OCI-LY7 (cell line): ENCODE measurements at regions of chr2 and their contacts with region 1.

Region 1: GRCh38 chr2:68362069-68362468 is 3.0 kb upstream of the PLEK start:
- DNase-seq: peak; percentile 94
- H3K4me3 ChIP-seq: peak overlapping the region; percentile 49
- H3K27ac ChIP-seq: peak overlapping the region; percentile 72
- H3K4me1 ChIP-seq: peaks cover 57% of the 10 kb centered on the region
- CTCF ChIP-seq: peak; percentile 92

Region 2: DNA sequence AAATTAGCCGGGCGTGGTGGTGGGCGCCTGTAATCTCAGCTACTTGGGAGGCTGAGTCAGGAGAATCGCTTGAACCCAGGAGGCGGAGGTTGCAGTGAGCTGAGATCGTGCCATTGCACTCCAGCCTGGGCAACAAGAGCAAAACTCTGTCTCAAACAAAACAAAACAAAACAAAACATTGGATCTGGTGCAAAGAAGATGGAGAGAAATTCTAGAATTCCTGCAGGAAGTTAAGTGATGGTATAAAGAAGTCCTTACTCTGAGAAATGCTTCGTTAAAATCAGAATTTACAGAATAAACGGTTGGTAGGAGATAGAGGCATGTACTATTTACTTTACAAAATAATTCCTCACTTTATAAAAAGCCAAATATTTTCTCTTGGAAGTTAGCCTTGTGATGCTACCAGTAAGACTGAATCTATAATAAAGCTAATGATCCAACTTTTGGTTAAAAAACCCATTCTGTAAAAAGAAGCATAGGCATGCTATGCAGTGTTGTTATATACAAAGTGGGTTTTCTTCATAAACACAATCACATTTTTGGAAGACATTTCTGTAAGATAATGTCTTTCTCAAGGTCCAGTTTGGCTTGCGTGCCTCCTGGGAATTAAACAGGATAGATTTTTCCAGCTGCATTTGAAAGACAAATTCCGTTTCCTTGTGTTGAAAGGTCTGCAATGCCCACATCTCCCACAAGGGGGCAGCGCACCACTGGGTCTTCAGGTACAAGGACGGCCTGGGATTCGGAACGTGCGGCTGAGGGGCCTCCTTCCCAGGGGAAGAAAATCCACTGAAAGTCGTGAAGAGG is 240.0 kb before region 1 on chr2:
- CTCF ChIA-PET with region 1: no interaction called
- POLR2A ChIA-PET with region 1: no interaction called
- intact Hi-C with region 1: loop called (anchors 1 kb)
- DNase-seq: peak; percentile 78
- H3K4me3 ChIP-seq: peak overlapping the region; percentile 47
- H3K27ac ChIP-seq: peak overlapping the region; percentile 96
- H3K4me1 ChIP-seq: peaks cover 48% of the 10 kb centered on the region
- CTCF ChIP-seq: peak; percentile 100

Region 3: DNA sequence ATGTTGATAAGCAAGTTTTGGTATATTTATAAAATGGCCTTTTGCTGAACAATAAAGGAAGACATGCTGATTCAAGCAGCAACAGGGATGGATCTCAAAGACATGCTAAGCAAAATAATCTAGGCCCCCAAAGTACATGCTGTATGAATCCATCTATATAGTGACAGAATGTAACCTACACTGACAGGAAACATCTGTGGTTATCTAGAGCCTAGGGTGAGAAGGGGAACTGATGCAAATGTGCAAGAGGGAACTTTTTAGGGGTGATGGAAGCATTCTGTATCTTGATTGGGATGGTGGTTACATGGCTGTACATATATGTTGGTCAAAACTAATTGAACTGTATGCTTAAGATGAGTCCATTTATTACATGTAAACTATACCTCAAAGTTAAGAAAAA is 66.6 kb before region 1 on chr2:
- CTCF ChIA-PET with region 1: no interaction called
- POLR2A ChIA-PET with region 1: no interaction called
- intact Hi-C with region 1: loop called (anchors 2 kb)
- DNase-seq: peak; percentile 56
- H3K4me3 ChIP-seq: no peak overlapping the region
- H3K27ac ChIP-seq: no peak overlapping the region
- H3K4me1 ChIP-seq: peaks cover 24% of the 10 kb centered on the region
- CTCF ChIP-seq: no peak

Region 4: GRCh38 chr2:68411397-68412126 is 49.5 kb after region 1 on chr2:
- CTCF ChIA-PET with region 1: interaction called, 4 read pairs
- POLR2A ChIA-PET with region 1: interaction called, 17 read pairs
- intact Hi-C with region 1: loop called (anchors 1 kb)
- DNase-seq: peak; percentile 91
- H3K4me3 ChIP-seq: peak overlapping the region; percentile 47
- H3K27ac ChIP-seq: peak overlapping the region; percentile 92
- H3K4me1 ChIP-seq: peaks cover 57% of the 10 kb centered on the region
- CTCF ChIP-seq: no peak

Region 5: GRCh38 chr2:68423966-68424650 is 62.0 kb after region 1 on chr2:
- CTCF ChIA-PET with region 1: no interaction called
- POLR2A ChIA-PET with region 1: interaction called, 7 read pairs
- intact Hi-C with region 1: loop called (anchors 1 kb)
- DNase-seq: peak; percentile 81
- H3K4me3 ChIP-seq: peak overlapping the region; percentile 39
- H3K27ac ChIP-seq: peak overlapping the region; percentile 88
- H3K4me1 ChIP-seq: peaks cover 90% of the 10 kb centered on the region
- CTCF ChIP-seq: no peak

Region 6: DNA sequence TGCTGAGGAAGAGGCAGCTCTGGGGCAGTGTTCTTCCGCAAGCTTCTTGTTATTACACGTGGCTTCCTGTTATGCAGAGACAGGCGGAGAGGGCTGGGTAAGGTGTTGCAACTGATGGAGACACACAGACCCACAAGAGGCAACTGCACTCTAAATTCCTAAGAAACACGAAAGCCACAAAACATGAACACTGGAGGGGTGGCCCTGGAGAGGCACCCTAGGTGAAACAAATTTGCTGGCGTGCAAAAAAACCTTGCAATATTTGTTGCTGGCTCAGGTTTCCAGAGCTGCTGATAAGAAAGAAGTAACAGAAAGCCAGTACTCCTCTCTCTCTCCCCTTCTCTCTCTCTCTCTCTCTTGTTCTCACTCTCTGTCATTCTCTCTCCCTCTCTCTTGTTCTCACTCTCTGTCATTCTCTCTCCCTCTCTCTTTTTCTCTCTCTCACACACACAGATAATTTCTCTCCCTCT is 404.3 kb after region 1 on chr2:
- CTCF ChIA-PET with region 1: no interaction called
- POLR2A ChIA-PET with region 1: no interaction called
- intact Hi-C with region 1: loop called (anchors 10 kb)
- DNase-seq: peak; percentile 84
- H3K4me3 ChIP-seq: peak overlapping the region; percentile 67
- H3K27ac ChIP-seq: peak overlapping the region; percentile 93
- H3K4me1 ChIP-seq: peaks cover 100% of the 10 kb centered on the region
- CTCF ChIP-seq: no peak; the same call in 1 of the 2 replicates